ENCODE measurements at regions of chr2 and their contacts with region 1.

Region 1: DNA sequence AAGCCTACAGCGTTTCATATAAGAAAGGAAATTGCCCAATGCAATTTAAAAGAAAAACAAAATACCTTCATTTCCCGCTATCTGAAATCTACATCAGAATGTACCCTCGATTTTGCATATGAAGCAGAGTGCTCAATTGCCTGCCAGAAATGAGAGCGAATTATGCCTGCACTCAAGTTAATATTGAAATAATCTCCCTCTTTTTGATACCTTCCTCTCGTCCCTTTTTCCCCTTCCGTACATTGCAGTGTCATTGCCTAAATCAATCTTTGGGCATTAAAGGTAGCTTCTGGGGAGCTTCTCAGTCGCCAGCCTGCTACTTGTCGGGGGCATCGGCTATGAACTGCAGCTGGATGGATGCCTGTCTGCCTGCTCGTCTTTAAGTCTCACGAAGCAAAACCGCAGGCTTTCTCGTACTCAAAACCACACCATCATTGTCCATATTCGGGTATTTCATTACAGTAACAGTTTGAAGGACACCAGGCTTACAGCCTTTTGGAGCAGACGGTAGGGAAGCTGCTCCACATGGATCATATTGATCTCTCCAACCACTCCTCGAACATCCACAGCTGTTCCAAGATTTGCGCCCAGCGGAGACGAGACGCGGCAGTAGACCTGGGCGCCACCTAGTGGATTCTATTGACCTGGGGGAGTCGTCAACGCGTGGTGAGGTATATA is 64.0 kb upstream of the HNRNPA3 start:
- DNase-seq: peak; percentile 70
- H3K4me3 ChIP-seq: peak overlapping the region; percentile 49 to 61
- H3K27ac ChIP-seq: no peak overlapping the region
- H3K4me1 ChIP-seq: peaks cover 4 to 5% of the 10 kb centered on the region in 2 experiments; a peak in 3 of 4 replicates
- H3K27me3 ChIP-seq: no peaks in the 10 kb centered on the region
- CTCF ChIP-seq: peak; percentile 91
- EP300 ChIP-seq: no peak
- RAD21 ChIP-seq: peak; percentile 76

Region 2: DNA sequence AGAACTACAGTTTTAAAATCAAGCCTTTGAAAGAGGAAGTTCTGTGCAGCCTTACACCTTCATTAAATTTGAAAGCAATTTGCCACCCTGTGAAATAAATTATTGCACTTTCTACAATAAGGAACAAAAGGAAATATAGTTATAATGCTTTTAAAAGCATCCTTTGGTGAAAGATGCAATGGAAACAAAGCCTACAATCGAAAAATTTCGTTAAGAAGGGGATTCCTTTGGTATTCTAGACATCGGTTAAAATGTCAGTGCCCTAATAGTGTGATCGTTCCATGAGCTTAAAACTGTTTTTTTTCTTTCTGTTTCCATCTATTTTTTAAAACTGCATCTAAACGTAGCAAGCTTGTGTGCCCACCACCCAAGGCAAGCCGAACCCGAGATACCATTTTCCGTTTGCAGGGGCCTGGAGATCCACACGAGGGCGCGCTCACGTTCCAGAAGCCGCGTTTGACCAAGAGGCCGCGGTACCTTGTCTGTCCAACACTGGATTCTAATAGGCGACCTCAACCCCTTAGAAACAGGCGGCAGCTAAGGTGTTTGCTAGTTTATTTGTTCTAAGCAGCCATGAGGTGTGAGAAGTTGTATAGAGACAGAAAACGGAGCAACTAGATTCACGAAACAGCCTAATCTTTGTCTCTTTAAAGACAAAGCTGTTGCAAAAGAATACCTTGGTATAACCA is 1037.5 kb before region 1 on chr2:
- CTCF ChIA-PET with region 1: interaction called, 22 read pairs
- POLR2A ChIA-PET with region 1: no interaction called
- DNase-seq: peak; percentile 88
- H3K4me3 ChIP-seq: peak overlapping the region in 1 of 2 experiments; percentile 19; a peak in 1 of 4 replicates
- H3K27ac ChIP-seq: no peak overlapping the region
- H3K4me1 ChIP-seq: peaks cover 0 to 4% of the 10 kb centered on the region in 2 experiments; a peak in 2 of 4 replicates
- H3K27me3 ChIP-seq: peaks cover 70% of the 10 kb centered on the region
- CTCF ChIP-seq: peak; percentile 90
- EP300 ChIP-seq: no peak
- RAD21 ChIP-seq: peak; percentile 65

Region 3: DNA sequence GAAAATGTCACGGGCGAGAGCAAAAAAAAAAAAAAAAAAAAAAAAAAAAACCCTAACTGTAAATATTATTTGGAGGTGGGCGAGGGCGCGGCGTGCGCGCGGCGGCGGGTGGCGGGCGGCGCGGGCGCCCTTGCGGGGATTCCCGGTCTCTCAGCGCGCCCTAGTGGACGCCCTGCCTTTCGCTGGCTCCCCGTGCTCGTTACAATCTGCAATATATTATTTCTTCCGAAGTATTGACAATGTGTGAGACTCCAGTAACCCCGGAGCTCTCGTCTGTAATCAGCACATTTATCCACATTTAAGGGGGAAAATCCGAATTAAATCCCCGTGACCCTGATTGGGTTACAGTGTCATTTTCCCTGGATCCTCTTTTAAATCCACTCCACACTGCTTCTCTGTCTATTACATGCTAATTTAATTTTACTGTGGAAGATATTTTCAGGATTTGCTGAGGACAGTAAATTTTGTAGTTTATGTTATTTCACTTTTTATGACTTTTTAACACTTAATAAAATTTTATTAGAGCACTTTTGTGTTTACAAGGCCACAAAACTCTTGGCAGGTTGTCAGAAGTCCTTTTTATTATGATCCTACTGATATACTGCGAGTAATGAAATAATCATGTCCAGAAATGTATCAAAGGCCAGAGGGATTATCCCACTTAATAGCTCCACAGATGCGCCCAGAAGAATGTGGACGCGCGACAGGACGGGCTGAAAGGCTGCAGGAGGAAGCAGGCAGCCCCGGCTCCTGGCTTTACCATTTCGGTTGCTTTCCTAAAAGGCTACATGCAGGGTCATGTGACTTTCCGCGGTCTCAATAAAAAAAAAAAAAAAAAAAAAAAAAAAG is 510.2 kb before region 1 on chr2:
- CTCF ChIA-PET with region 1: interaction called, 19 read pairs
- POLR2A ChIA-PET with region 1: interaction called, 3 read pairs
- DNase-seq: peak; percentile 89
- H3K4me3 ChIP-seq: peak overlapping the region; percentile 75 to 82
- H3K27ac ChIP-seq: peak overlapping the region; percentile 73 to 96
- H3K4me1 ChIP-seq: peaks cover 26 to 28% of the 10 kb centered on the region in 2 experiments; a peak in 3 of 4 replicates
- H3K27me3 ChIP-seq: no peaks in the 10 kb centered on the region
- CTCF ChIP-seq: peak; percentile 91
- EP300 ChIP-seq: peak in 1 of 2 experiments; percentile 74; a peak in 1 of 4 replicates
- RAD21 ChIP-seq: peak; percentile 81

Region 4: GRCh38 chr2:176669398-176670174 is 479.0 kb before region 1 on chr2:
- CTCF ChIA-PET with region 1: interaction called, 13 read pairs
- POLR2A ChIA-PET with region 1: no interaction called
- DNase-seq: no peak
- H3K4me3 ChIP-seq: no peak overlapping the region
- H3K27ac ChIP-seq: no peak overlapping the region
- H3K4me1 ChIP-seq: peaks cover 0 to 18% of the 10 kb centered on the region in 2 experiments; a peak in 2 of 4 replicates
- H3K27me3 ChIP-seq: no peaks in the 10 kb centered on the region
- CTCF ChIP-seq: no peak
- EP300 ChIP-seq: no peak
- RAD21 ChIP-seq: no peak

Region 5: GRCh38 chr2:176814306-176815052 is 334.1 kb before region 1 on chr2:
- CTCF ChIA-PET with region 1: interaction called, 231 read pairs
- POLR2A ChIA-PET with region 1: no interaction called
- DNase-seq: peak; percentile 31
- H3K4me3 ChIP-seq: no peak overlapping the region
- H3K27ac ChIP-seq: no peak overlapping the region
- H3K4me1 ChIP-seq: peaks cover 2 to 5% of the 10 kb centered on the region in 2 experiments; a peak in 2 of 4 replicates
- H3K27me3 ChIP-seq: no peaks in the 10 kb centered on the region
- CTCF ChIP-seq: peak; percentile 63
- EP300 ChIP-seq: no peak
- RAD21 ChIP-seq: peak; percentile 78

Region 6: DNA sequence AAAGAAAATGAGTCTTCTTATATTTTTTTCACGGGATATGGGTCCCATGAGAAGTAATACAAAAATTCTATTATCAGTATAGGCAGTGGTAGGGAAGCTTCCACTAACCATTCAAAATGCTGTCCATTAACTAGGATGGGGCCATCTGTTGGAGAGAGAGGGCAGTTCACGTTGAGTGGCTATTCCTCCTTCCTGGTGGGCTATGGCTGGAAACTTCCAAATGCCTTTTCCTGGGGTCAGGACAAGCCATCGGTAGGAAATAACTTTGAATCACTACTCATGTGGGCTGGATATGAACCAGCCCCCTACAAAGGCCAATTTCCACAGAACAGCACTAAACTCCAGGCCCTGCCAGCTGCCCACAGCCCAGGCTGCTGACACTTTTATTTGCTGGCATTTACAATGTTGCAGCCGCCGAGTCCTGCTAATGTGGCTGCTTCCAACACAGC is 92.1 kb before region 1 on chr2:
- CTCF ChIA-PET with region 1: interaction called, 20 read pairs
- POLR2A ChIA-PET with region 1: no interaction called
- DNase-seq: peak; percentile 53
- H3K4me3 ChIP-seq: no peak overlapping the region
- H3K27ac ChIP-seq: no peak overlapping the region
- H3K4me1 ChIP-seq: peaks cover 0 to 5% of the 10 kb centered on the region in 2 experiments; a peak in 2 of 4 replicates
- H3K27me3 ChIP-seq: no peaks in the 10 kb centered on the region
- CTCF ChIP-seq: peak; percentile 32; the same call in 1 of the 2 replicates
- EP300 ChIP-seq: no peak
- RAD21 ChIP-seq: peak; percentile 62

Region 7: GRCh38 chr2:177552422-177553175 is 404.0 kb after region 1 on chr2:
- CTCF ChIA-PET with region 1: no interaction called
- POLR2A ChIA-PET with region 1: no interaction called
- DNase-seq: peak; percentile 88
- H3K4me3 ChIP-seq: peak overlapping the region; percentile 93 to 99
- H3K27ac ChIP-seq: peak overlapping the region; percentile 97 to 100
- H3K4me1 ChIP-seq: peaks cover 0 to 24% of the 10 kb centered on the region in 2 experiments; a peak in 2 of 4 replicates
- H3K27me3 ChIP-seq: no peaks in the 10 kb centered on the region
- CTCF ChIP-seq: no peak
- EP300 ChIP-seq: no peak
- RAD21 ChIP-seq: peak; percentile 10; the same call in 1 of the 2 replicates

Region 8: DNA sequence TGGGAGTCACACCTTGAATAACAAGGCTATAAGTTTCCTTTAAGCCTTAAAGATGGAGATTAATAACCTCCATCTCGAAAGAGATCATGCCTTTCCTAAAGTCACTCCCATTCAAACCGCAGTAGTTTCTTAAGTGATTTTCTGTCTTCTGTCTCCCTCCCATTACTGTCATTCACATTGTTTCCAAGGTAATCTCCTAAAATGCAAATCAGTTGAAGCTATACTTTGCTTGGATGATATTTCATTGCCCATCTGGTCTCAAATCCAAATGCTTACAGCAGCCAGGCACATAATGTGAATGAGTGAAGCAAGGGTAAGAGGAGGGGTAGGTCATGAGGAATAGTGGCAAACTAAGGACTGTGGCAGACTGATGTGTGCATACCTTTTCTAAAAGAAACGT is 1784.9 kb after region 1 on chr2:
- CTCF ChIA-PET with region 1: no interaction called
- POLR2A ChIA-PET with region 1: no interaction called
- DNase-seq: no peak
- H3K4me3 ChIP-seq: no peak overlapping the region
- H3K27ac ChIP-seq: no peak overlapping the region
- H3K4me1 ChIP-seq: no peaks in the 10 kb centered on the region
- H3K27me3 ChIP-seq: no peaks in the 10 kb centered on the region
- CTCF ChIP-seq: no peak
- EP300 ChIP-seq: no peak
- RAD21 ChIP-seq: no peak